ENCODE measurements at regions of chr22 and their contacts with region 1.

Region 1: GRCh38 chr22:43385770-43386641 is 25.8 kb upstream of the MPPED1 start:
- DNase-seq: peak; percentile 73 to 86
- ATAC-seq: peak; percentile 87 to 94 (median 92)
- H3K4me3 ChIP-seq: no peak overlapping the region
- H3K4me3 Mint-ChIP-seq: no peak overlapping the region
- H3K27ac ChIP-seq: no peak overlapping the region
- H3K27ac Mint-ChIP-seq: no peak overlapping the region
- H3K4me1 ChIP-seq: peaks cover 12% of the 10 kb centered on the region
- H3K4me1 Mint-ChIP-seq: peaks cover 0 to 6% of the 10 kb centered on the region in 2 donors
- H3K27me3 ChIP-seq: peaks cover 13% of the 10 kb centered on the region
- H3K27me3 Mint-ChIP-seq: peaks cover 35 to 66% of the 10 kb centered on the region in 2 donors
- CTCF ChIP-seq: peak; percentile 84

Region 2: DNA sequence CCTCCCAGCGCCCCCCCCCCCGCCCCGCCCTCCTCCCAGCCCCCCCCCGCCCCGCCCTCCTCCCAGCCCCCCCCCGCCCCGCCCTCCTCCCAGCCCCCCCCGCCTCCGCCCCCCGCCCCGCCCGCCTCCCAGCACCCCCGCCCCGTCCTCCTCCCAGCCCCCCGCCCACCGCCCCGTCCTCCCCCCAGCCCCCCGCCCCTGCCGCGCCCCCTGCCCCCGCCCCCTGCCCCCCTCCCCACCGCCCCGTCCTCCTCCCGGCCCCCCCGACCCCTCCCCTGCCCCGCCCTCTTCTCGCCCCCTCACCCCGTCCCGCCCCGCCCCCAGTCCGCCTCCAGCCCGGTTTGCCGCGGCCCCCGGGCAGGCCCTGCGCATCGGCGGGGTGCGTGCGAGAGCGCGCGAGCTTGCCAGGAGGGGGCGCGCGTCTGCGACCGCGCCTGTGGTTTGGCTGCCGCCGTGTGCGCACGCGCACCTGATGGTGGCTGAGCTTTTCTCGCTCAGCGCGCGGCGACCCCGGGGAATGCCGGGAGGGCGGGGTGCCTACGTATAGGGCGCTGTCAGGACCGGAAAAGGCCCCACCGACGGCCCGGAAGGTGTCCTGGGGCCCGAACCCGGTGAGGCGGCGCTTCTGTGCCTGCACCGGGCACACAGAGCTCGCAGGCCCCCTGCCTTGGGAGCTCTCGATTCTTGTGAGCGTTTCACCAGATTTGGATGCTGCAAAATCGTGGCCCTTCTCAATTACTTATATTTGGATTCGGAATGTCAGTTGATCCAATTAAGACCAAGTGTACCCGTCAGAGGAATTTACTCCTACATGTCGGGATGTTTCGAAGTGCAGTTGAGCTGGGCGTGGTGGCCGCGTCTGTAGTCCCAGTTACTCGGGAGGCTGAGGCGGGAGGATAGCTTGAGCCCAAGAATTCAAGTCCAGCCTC is 198.6 kb before region 1 on chr22:
- intact Hi-C with region 1: no loop called
- DNase-seq: peak; percentile 94 to 99
- ATAC-seq: peak; percentile 87 to 94 (median 89)
- H3K4me3 ChIP-seq: peak overlapping the region; percentile 36
- H3K4me3 Mint-ChIP-seq: peak overlapping the region; percentile 79
- H3K27ac ChIP-seq: peak overlapping the region; percentile 85
- H3K27ac Mint-ChIP-seq: peak overlapping the region; percentile 91 to 93
- H3K4me1 ChIP-seq: peaks cover 19% of the 10 kb centered on the region
- H3K4me1 Mint-ChIP-seq: peaks cover 4 to 12% of the 10 kb centered on the region in 2 donors
- H3K27me3 ChIP-seq: no peaks in the 10 kb centered on the region
- H3K27me3 Mint-ChIP-seq: no peaks in the 10 kb centered on the region
- CTCF ChIP-seq: peak; percentile 51

Region 3: GRCh38 chr22:43230971-43231723 is 154.9 kb before region 1 on chr22:
- intact Hi-C with region 1: loop called (anchors 1 kb)
- DNase-seq: peak; percentile 70 to 83
- ATAC-seq: peak; percentile 65 to 96 (median 90)
- H3K4me3 ChIP-seq: no peak overlapping the region
- H3K4me3 Mint-ChIP-seq: no peak overlapping the region
- H3K27ac ChIP-seq: no peak overlapping the region
- H3K27ac Mint-ChIP-seq: peak overlapping the region in 1 of 2 donors; percentile 44
- H3K4me1 ChIP-seq: peaks cover 7% of the 10 kb centered on the region
- H3K4me1 Mint-ChIP-seq: peaks cover 0 to 8% of the 10 kb centered on the region in 2 donors
- H3K27me3 ChIP-seq: no peaks in the 10 kb centered on the region
- H3K27me3 Mint-ChIP-seq: peaks cover 14 to 15% of the 10 kb centered on the region in 2 donors
- CTCF ChIP-seq: peak; percentile 99

Region 4: DNA sequence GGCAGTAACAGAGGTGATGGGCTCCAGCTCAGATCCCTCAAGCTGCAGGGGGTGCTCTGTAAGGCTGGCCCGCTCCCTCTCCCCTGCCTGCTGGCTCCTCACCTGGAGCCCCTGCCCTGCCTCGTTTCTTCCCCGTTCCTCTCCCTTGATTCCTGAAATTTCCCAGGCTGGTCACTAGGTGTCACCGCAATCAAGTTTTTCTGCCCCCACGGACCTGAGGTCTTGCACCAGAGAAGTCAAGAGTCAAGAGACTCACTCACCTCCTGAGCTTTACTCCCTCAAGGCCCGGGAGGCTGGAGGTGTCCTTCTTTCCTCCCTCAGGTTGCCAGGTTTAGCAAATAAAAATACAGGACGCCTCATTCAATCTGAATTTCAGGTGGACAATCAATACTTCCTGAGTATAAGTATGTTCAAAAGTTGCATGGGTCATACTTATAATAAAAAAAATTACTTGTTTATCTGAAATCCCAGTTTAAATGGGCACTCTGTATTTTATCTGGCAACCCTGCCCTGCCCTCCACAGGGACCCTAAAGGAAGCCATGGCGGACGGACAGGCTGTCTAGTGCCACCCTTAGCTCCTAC is 112.0 kb before region 1 on chr22:
- intact Hi-C with region 1: loop called (anchors 1 kb)
- DNase-seq: peak in 1 of 2 donors; percentile 74
- ATAC-seq: peak; percentile 54 to 85 (median 73)
- H3K4me3 ChIP-seq: no peak overlapping the region
- H3K4me3 Mint-ChIP-seq: no peak overlapping the region
- H3K27ac ChIP-seq: no peak overlapping the region
- H3K27ac Mint-ChIP-seq: no peak overlapping the region
- H3K4me1 ChIP-seq: peaks cover 9% of the 10 kb centered on the region
- H3K4me1 Mint-ChIP-seq: peaks cover 6 to 19% of the 10 kb centered on the region in 2 donors
- H3K27me3 ChIP-seq: no peaks in the 10 kb centered on the region
- H3K27me3 Mint-ChIP-seq: peaks cover 0 to 15% of the 10 kb centered on the region in 2 donors
- CTCF ChIP-seq: peak; percentile 52

Region 5: DNA sequence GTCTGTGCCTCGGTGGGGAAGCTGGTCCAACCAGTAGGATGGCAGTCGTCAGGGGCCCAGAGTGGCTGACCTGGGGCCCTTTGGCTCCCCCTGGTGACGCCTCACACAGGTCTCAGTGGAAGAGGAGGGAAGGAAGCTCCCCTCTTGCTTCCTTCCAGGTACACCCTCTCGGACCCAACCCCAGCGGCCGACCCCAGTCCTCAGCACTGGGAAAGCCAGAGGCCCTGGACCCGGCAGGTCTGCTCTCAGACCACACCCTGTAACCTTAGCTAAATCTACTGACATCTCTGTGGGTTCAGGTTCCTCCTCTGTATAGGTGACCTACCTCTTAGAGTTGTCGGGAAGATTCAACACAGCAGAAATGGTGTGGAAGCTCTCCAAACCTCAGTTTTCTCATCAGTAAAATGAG is 39.5 kb before region 1 on chr22:
- intact Hi-C with region 1: loop called (anchors 2 kb)
- DNase-seq: peak; percentile 69 to 81
- ATAC-seq: peak; percentile 57 to 70 (median 68)
- H3K4me3 ChIP-seq: no peak overlapping the region
- H3K4me3 Mint-ChIP-seq: no peak overlapping the region
- H3K27ac ChIP-seq: no peak overlapping the region
- H3K27ac Mint-ChIP-seq: no peak overlapping the region
- H3K4me1 ChIP-seq: peaks cover 10% of the 10 kb centered on the region
- H3K4me1 Mint-ChIP-seq: peaks cover 4 to 27% of the 10 kb centered on the region in 2 donors
- H3K27me3 ChIP-seq: peaks cover 27% of the 10 kb centered on the region
- H3K27me3 Mint-ChIP-seq: peaks cover 55 to 62% of the 10 kb centered on the region in 2 donors
- CTCF ChIP-seq: peak; percentile 89

Region 6: GRCh38 chr22:44625981-44626687 is 1240.1 kb after region 1 on chr22:
- intact Hi-C with region 1: loop called (anchors 5 kb)
- DNase-seq: peak; percentile 76 to 91
- ATAC-seq: peak; percentile 84 to 87 (median 86)
- H3K4me3 ChIP-seq: no peak overlapping the region
- H3K4me3 Mint-ChIP-seq: no peak overlapping the region
- H3K27ac ChIP-seq: no peak overlapping the region
- H3K27ac Mint-ChIP-seq: peak overlapping the region in 1 of 2 donors; percentile 12
- H3K4me1 ChIP-seq: peaks cover 9% of the 10 kb centered on the region
- H3K4me1 Mint-ChIP-seq: peaks cover 7 to 18% of the 10 kb centered on the region in 2 donors
- H3K27me3 ChIP-seq: no peaks in the 10 kb centered on the region
- H3K27me3 Mint-ChIP-seq: peaks cover 0 to 2% of the 10 kb centered on the region in 2 donors
- CTCF ChIP-seq: peak; percentile 99

Measured in natural killer cell (primary cell).